Mammary epithelial cell (primary cell): ENCODE measurements at regions of chr4 and their contacts with region 1.

Region 1: GRCh38 chr4:86593688-86594558 is at the start of gene PTPN13:
- DNase-seq: peak; percentile 99
- H3K4me3 ChIP-seq: peak within 1 kb of the TSS; percentile 85 to 94 (median 91)
- H3K27ac ChIP-seq: peak within 1 kb of the TSS; percentile 93
- H3K4me1 ChIP-seq: peaks cover 33% of the 10 kb centered on the region
- H3K27me3 ChIP-seq: no peaks in the 10 kb centered on the region
- CTCF ChIP-seq: peak in 1 of 2 donors; percentile 7
- total RNA-seq, gene PTPN13: 60.3 to 60.6 TPM

Region 2: GRCh38 chr4:86036736-86037135 is 557.2 kb before region 1 on chr4:
- CTCF ChIA-PET with region 1: no interaction called
- dilution Hi-C with region 1: no loop called
- in situ Hi-C with region 1: no loop called
- intact Hi-C with region 1: loop called (anchors 5 kb)
- DNase-seq: peak; percentile 69
- H3K4me3 ChIP-seq: no peak overlapping the region
- H3K27ac ChIP-seq: peak overlapping the region; percentile 3
- H3K4me1 ChIP-seq: peaks cover 34% of the 10 kb centered on the region
- H3K27me3 ChIP-seq: no peaks in the 10 kb centered on the region
- CTCF ChIP-seq: no peak

Region 3: DNA sequence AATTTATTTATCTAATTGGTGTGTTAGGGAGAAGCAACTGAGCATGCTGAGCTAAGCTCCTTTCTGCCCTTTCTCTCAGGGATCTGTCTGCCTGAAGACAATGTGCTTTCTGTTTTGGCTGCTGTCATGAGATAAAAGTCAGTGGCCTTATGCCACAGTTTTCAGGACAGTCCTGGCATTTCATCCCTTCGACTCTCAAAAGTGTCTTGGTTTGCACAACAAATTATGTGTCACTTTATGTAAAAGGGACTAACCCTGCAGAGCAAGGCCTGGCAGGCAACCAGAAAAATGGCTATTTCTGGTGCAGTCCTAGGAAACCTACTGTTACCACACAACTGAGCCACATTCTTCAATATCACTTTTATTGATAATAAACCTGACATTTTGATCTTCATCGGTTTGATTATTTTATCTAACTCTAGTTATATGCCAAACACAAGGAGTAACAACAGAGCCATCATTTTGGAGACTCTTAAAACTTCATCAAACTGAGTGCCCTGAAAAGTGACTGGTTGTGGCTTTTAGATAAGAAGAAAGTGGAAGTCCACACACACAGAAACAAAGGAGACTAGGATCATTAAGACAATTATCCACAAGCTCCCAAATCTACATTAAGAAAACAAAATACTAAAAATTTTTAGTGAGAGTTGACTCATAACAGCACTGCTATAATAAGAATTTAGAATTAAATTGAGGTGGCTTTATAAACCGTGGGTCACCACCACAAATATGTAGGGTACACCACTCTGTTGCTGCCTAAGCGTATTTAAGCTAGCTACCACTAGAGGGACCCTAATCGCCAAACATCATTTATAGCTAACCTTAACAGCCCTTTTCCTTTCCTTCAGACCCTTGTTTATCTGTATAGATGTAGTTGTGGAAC is 95.7 kb before region 1 on chr4:
- CTCF ChIA-PET with region 1: interaction called, 5 read pairs
- dilution Hi-C with region 1: no loop called
- in situ Hi-C with region 1: no loop called
- intact Hi-C with region 1: loop called (anchors 1 kb)
- DNase-seq: peak; percentile 40
- H3K4me3 ChIP-seq: no peak overlapping the region
- H3K27ac ChIP-seq: no peak overlapping the region
- H3K4me1 ChIP-seq: peaks cover 26% of the 10 kb centered on the region
- H3K27me3 ChIP-seq: no peaks in the 10 kb centered on the region
- CTCF ChIP-seq: peak; percentile 78 to 89

Region 4: GRCh38 chr4:86522349-86522748 is 71.6 kb before region 1 on chr4:
- CTCF ChIA-PET with region 1: interaction called, 4 read pairs
- dilution Hi-C with region 1: no loop called
- in situ Hi-C with region 1: no loop called
- intact Hi-C with region 1: loop called (anchors 1 kb)
- DNase-seq: no peak
- H3K4me3 ChIP-seq: no peak overlapping the region
- H3K27ac ChIP-seq: no peak overlapping the region
- H3K4me1 ChIP-seq: peaks cover 6% of the 10 kb centered on the region
- H3K27me3 ChIP-seq: no peaks in the 10 kb centered on the region
- CTCF ChIP-seq: peak; percentile 33 to 49

Region 5: DNA sequence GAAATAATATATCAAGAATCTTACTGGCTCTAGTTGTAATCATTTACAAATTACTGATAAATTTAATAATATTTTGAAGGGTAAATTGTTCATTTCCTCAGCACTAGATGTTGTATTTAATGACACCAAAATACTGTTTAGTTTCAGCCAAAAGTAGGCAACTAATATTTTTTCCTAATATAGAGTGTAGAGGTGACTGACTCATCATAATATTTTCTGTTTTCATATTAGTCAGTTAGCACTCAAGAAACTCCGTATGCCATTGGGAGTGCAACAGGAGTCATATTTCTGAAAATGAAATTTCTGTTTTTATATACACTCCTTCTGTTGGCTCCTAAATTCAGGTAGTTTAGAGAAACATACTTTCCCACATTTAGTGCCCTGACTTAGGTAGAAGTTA is 36.4 kb before region 1 on chr4:
- CTCF ChIA-PET with region 1: no interaction called
- dilution Hi-C with region 1: no loop called
- in situ Hi-C with region 1: no loop called
- intact Hi-C with region 1: loop called (anchors 5 kb)
- DNase-seq: peak; percentile 62
- H3K4me3 ChIP-seq: no peak overlapping the region
- H3K27ac ChIP-seq: peak overlapping the region; percentile 76
- H3K4me1 ChIP-seq: peaks cover 22% of the 10 kb centered on the region
- H3K27me3 ChIP-seq: no peaks in the 10 kb centered on the region
- CTCF ChIP-seq: no peak

Region 6: GRCh38 chr4:86664959-86665358 is 71.0 kb after region 1 on chr4:
- CTCF ChIA-PET with region 1: no interaction called
- dilution Hi-C with region 1: no loop called
- in situ Hi-C with region 1: no loop called
- intact Hi-C with region 1: loop called (anchors 5 kb)
- DNase-seq: peak; percentile 69
- H3K4me3 ChIP-seq: no peak overlapping the region
- H3K27ac ChIP-seq: peak overlapping the region; percentile 48
- H3K4me1 ChIP-seq: peaks cover 9% of the 10 kb centered on the region
- H3K27me3 ChIP-seq: peaks cover 2% of the 10 kb centered on the region
- CTCF ChIP-seq: no peak

Region 7: DNA sequence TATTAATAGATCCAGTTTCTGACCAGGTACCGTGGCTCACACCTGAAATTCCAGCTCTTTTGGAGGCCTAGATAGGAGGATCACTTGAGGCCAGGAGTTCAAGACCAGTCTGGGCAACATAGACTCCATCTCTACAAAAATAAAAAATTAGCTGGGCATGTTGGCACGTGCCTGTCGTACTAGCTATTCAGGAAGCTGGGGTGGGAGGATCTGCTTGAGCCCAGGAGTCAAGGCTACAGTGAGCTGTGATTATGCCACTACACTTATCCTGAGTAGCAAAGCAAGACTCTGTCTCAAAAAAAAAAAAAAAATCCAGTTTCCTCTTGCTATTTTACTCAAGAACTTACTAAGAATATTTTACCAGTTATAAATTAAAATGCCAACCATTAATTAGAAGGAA is 163.5 kb after region 1 on chr4:
- CTCF ChIA-PET with region 1: no interaction called
- dilution Hi-C with region 1: no loop called
- in situ Hi-C with region 1: no loop called
- intact Hi-C with region 1: loop called (anchors 10 kb)
- DNase-seq: peak; percentile 47
- H3K4me3 ChIP-seq: no peak overlapping the region
- H3K27ac ChIP-seq: no peak overlapping the region
- H3K4me1 ChIP-seq: no peaks in the 10 kb centered on the region
- H3K27me3 ChIP-seq: no peaks in the 10 kb centered on the region
- CTCF ChIP-seq: no peak